AG04449 (cell line): ENCODE measurements at regions of chr2 and their contacts with region 1.

Region 1: GRCh38 chr2:201363857-201364560 is 6.9 kb upstream of the FLACC1 start:
- DNase-seq: no peak
- H3K4me3 ChIP-seq: no peak overlapping the region
- CTCF ChIP-seq: peak; percentile 63

Region 2: DNA sequence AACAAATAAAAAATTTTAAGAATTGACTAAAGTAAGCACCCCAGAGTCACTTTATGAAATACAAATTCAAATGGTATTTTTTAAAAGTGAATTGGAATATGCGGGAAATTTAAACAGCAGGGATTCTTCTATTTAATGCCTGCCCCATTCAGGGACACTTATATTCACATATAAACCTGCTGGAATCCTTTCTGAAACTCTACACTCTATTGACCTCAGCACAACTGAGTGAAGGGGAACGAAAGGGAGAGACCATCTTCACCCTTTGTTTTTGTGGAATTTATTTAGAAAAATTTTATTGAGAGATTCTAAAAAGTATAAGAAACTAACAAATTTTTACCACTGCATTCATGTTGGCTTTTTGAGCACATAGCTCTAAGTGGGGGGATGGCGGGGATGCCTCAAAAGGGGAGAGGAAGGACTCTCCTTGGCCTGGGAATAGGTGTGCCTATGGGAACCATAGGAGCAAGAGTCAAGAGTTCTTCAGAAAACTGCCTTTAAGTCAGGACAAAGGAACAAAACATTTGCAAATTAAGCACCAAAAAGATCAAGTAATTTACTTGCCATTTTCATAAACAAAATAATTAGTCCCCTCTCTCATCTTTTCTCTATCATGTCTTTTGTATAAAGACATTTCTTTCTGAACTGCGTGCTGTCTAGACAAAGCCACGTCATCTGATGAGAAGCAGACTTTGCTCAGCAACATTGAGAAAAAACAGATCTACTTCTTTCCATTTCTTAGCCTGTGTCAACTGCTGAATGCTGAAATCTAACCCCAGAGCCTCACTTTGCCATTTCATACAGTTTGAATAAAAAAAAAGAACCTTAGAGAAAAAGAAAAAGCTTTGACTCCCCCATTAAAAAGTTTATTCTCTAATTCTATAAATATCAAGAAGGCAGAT is 14.7 kb after region 1 on chr2:
- CTCF ChIA-PET with region 1: interaction called, 19 read pairs
- POLR2A ChIA-PET with region 1: no interaction called
- DNase-seq: no peak
- H3K4me3 ChIP-seq: no peak overlapping the region
- CTCF ChIP-seq: no peak